ENCODE measurements at regions of chr6 and their contacts with region 1.

Region 1: DNA sequence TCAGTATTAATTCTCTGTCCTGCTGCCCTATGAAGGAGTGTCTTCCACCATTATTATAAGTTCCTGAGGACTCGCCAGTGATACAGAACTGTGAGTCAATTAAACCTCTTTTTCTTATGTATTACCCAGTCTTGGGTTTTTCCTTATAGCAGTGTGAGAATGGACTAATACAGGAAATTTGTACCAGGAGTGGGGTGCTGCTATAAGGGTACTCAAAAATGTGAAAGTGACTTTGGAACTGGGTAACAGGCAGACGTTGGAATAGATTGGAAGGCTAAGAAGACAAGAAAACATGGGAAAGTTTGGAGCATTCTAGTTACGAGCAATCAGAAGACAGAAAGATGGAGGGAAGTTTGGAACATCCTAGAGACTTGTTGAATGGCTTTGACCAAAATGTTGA is 616.7 kb upstream of the EPHA7 start:
- DNase-seq: no peak
- H3K4me3 ChIP-seq: no peak overlapping the region
- H3K27ac ChIP-seq: no peak overlapping the region
- H3K4me1 ChIP-seq: no peaks in the 10 kb centered on the region
- H3K27me3 ChIP-seq: no peaks in the 10 kb centered on the region
- CTCF ChIP-seq: no peak
- POLR2A ChIP-seq: no peak

Region 2: GRCh38 chr6:93008357-93008756 is 1027.7 kb before region 1 on chr6:
- intact Hi-C with region 1: no loop called
- DNase-seq: no peak
- H3K4me3 ChIP-seq: no peak overlapping the region
- H3K27ac ChIP-seq: no peak overlapping the region
- H3K4me1 ChIP-seq: no peaks in the 10 kb centered on the region
- H3K27me3 ChIP-seq: no peaks in the 10 kb centered on the region
- CTCF ChIP-seq: no peak
- POLR2A ChIP-seq: no peak

Region 3: GRCh38 chr6:93849857-93850256 is 186.2 kb before region 1 on chr6:
- intact Hi-C with region 1: loop called (anchors 10 kb)
- DNase-seq: no peak
- H3K4me3 ChIP-seq: no peak overlapping the region
- H3K27ac ChIP-seq: no peak overlapping the region
- H3K4me1 ChIP-seq: no peaks in the 10 kb centered on the region
- H3K27me3 ChIP-seq: no peaks in the 10 kb centered on the region
- CTCF ChIP-seq: no peak
- POLR2A ChIP-seq: no peak

Region 4: GRCh38 chr6:94089941-94090340 is 53.9 kb after region 1 on chr6:
- intact Hi-C with region 1: no loop called
- DNase-seq: no peak
- H3K4me3 ChIP-seq: no peak overlapping the region
- H3K27ac ChIP-seq: no peak overlapping the region
- H3K4me1 ChIP-seq: no peaks in the 10 kb centered on the region
- H3K27me3 ChIP-seq: no peaks in the 10 kb centered on the region
- CTCF ChIP-seq: no peak
- POLR2A ChIP-seq: no peak

Region 5: DNA sequence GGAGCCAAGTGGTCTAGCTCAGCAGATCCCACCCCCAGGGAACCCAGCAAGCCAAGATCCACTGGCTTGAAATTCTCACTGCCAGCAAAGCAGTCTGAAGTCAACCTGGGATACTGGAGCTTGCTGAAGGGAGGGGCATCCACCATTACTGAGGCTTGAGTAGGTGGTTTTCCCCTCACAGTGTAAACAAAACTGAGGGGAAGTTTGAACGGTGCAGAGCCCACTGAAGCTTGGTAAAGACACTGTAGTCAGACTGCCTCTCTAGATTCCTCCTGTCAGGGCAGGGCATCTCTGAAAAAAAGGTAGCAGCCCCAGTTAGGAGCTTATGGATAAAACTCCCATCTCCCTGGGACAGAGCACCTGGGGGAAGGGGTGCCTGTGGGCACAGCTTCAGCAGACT is 202.8 kb after region 1 on chr6:
- intact Hi-C with region 1: no loop called
- DNase-seq: no peak
- H3K4me3 ChIP-seq: no peak overlapping the region
- H3K27ac ChIP-seq: no peak overlapping the region
- H3K4me1 ChIP-seq: no peaks in the 10 kb centered on the region
- H3K27me3 ChIP-seq: no peaks in the 10 kb centered on the region
- CTCF ChIP-seq: no peak
- POLR2A ChIP-seq: no peak

Region 6: GRCh38 chr6:94372229-94372628 is 336.2 kb after region 1 on chr6:
- intact Hi-C with region 1: no loop called
- DNase-seq: no peak
- H3K4me3 ChIP-seq: no peak overlapping the region
- H3K27ac ChIP-seq: no peak overlapping the region
- H3K4me1 ChIP-seq: no peaks in the 10 kb centered on the region
- H3K27me3 ChIP-seq: no peaks in the 10 kb centered on the region
- CTCF ChIP-seq: no peak
- POLR2A ChIP-seq: no peak